ENCODE measurements at regions of chr11 and their contacts with region 1.

Region 1: DNA sequence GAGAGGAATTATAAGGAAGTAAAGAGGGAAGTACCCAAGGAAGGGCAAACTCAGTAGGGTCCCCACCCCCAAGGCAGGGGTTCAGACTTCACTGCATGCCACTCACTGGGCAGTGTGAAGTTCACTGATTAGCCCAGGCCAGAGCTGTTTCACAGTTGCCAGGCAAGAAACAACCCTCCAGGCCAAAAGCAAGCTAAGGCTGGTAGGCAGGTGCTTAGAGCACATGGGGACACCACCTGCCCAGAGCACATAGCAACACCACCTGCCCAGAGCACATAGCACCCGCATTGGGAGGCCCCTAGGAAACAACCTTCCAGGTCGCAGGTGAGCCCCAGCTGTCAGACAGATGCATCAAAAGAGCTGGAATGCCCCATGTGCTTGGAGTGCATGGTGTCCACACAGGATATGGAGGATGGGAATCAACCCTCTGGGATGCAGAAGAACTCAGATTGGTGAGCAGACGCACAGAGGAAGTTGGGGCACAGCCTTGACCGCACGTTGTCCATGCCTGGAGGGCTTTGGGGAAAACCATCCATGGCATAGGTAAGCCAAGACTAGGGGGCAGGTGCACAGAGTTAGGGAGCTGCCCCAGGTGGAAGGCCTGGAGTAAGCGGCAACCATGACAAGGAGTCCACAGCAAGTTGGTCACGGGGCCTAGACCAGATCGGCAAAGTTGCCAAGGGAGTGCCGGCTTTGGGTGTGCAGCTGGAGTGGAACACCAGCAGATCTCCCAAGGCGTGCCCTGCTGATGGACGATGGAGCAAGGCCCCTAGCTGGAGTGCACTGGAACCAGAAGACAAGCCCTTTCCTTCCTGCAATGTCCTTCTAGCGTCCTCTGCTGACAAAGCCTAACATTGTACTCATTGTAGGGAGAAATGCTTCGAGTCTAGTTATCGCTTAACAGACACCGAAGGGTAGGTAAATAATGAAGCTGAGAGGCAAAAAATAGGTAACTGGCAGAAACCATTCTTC is 7.8 kb upstream of the TMEM216 start:
- DNase-seq: no peak
- H3K4me3 Mint-ChIP-seq: no peak overlapping the region
- H3K27ac Mint-ChIP-seq: no peak overlapping the region
- H3K4me1 Mint-ChIP-seq: peaks cover 6% of the 10 kb centered on the region
- H3K27me3 Mint-ChIP-seq: no peaks in the 10 kb centered on the region

Region 2: GRCh38 chr11:61028272-61028761 is 356.2 kb before region 1 on chr11:
- CTCF ChIA-PET with region 1: no interaction called
- DNase-seq: peak; percentile 73
- H3K4me3 Mint-ChIP-seq: peak overlapping the region; percentile 82
- H3K27ac Mint-ChIP-seq: peak overlapping the region; percentile 98
- H3K4me1 Mint-ChIP-seq: peaks cover 89% of the 10 kb centered on the region
- H3K27me3 Mint-ChIP-seq: no peaks in the 10 kb centered on the region

Region 3: GRCh38 chr11:61294717-61295595 is 89.6 kb before region 1 on chr11 and contains the start of gene VWCE:
- CTCF ChIA-PET with region 1: interaction called, 13 read pairs
- DNase-seq: peak; percentile 81
- H3K4me3 Mint-ChIP-seq: peak within 1 kb of the TSS; percentile 77
- H3K27ac Mint-ChIP-seq: no peak within 1 kb of the TSS
- H3K4me1 Mint-ChIP-seq: peaks cover 37% of the 10 kb centered on the region
- H3K27me3 Mint-ChIP-seq: peaks cover 43% of the 10 kb centered on the region

Region 4: DNA sequence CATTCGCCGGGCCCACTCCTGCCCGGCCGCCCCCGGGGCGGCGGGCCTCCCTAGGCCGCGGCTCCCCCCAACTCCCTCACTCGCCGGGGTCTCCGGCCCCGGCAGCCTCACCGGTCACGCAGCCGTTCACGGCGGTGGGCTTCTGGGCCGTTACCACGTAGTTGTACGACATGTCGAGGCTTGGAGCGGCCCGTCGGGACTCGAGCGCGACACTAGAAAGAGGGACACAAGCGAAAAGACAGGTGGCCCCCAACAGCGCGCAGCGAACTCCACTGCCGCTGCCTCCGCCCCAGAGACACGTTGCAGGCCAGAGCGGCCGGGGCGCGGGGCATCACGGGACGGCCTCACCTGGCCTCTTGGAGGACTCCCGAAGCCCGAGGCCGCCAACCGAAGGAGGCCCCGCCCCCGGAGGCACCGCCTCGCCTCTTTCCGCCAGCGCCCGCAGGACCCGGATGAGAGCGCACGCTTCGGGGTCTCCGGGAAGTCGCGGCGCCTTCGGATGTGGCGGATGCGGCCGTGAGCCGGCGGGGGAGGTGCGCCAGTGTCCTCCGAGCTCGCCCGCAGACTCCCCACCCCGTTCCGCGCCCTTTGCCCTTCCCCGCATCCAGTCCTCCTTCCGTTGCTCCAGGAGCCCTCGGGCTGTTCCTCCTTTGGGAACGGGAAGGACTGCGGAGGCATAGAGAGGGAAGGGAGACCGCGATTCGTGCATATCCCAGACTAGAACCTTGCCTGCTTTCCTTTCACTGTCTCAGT is 51.6 kb before region 1 on chr11 and contains the starts of genes DDB1 and TKFC:
- CTCF ChIA-PET with region 1: interaction called, 309 read pairs
- DNase-seq: peak; percentile 98
- H3K4me3 Mint-ChIP-seq: peak within 1 kb of the TSS; percentile 93
- H3K27ac Mint-ChIP-seq: peak within 1 kb of the TSS; percentile 97
- H3K4me1 Mint-ChIP-seq: peaks cover 72% of the 10 kb centered on the region
- H3K27me3 Mint-ChIP-seq: no peaks in the 10 kb centered on the region

Region 5: DNA sequence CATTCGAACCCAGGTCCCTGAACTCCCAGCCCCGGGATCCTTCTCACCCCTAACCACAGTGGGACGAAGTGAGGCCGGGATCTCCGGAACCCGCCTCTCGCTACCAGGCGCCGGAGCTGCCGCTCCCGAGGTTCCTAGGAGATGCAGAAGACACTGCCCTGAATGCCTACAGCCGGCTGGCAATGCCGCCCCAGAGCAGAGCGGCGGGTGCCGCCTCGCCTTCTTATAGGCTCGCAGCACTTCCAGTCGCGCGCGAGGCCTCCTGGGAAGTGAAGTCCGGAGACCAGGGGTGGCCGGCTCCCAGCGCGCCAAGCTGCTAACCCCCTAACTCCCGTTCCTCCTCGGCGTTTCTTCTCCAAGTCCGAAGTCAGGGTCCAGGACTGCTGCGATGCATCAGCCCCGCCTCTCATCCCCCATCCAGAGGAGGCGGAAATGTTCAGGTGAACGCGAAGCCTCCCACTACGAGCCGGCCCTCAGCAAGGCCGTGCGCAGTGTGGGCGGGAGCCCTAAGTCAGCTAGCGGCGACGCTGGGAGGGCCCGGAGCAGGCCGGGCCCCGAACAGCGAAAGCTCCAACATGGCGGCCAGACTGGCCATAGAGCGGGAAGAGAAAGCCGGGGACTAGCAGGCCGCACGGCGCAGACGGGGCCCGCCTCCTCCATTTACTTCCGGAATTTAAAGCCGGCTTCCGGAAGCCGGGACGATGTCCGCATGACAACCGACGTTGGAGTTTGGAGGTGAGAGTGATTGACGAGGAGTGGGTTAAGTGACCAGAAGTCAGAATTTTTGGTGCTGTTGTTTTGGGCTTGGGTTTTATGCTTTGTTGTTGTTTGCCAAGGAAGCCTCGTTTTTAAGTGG is 22.6 kb before region 1 on chr11 and contains the starts of genes CYB561A3 and TMEM138:
- CTCF ChIA-PET with region 1: interaction called, 46 read pairs
- DNase-seq: peak; percentile 95
- H3K4me3 Mint-ChIP-seq: peak within 1 kb of the TSS; percentile 100
- H3K27ac Mint-ChIP-seq: peak within 1 kb of the TSS; percentile 99
- H3K4me1 Mint-ChIP-seq: peaks cover 49% of the 10 kb centered on the region
- H3K27me3 Mint-ChIP-seq: no peaks in the 10 kb centered on the region

Region 6: DNA sequence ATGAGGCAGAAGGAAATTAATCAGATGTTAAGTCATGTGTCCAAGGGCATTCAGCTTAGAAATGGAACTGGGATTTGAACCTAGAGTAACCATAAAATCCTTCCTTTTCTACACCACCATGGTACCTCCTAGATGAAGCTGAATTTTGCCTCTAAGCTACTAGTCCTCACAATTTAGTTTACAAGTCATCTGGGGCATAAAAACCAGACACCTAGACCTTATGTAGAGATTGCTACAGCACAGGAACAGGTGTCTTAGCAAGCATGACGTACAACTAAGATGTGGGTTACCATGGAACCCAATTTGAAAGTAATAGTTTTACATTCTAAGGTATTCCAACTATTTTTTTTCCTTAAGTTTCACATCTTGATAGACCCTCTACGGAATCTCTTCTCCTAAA is 17.0 kb after region 1 on chr11:
- CTCF ChIA-PET with region 1: interaction called, 30 read pairs
- DNase-seq: no peak
- H3K4me3 Mint-ChIP-seq: no peak overlapping the region
- H3K27ac Mint-ChIP-seq: no peak overlapping the region
- H3K4me1 Mint-ChIP-seq: no peaks in the 10 kb centered on the region
- H3K27me3 Mint-ChIP-seq: no peaks in the 10 kb centered on the region

Region 7: GRCh38 chr11:61477727-61478148 is 93.2 kb after region 1 on chr11:
- CTCF ChIA-PET with region 1: no interaction called
- DNase-seq: peak; percentile 68
- H3K4me3 Mint-ChIP-seq: no peak overlapping the region
- H3K27ac Mint-ChIP-seq: no peak overlapping the region
- H3K4me1 Mint-ChIP-seq: peaks cover 7% of the 10 kb centered on the region
- H3K27me3 Mint-ChIP-seq: peaks cover 3% of the 10 kb centered on the region

Region 8: GRCh38 chr11:61495801-61496597 is 111.4 kb after region 1 on chr11:
- CTCF ChIA-PET with region 1: no interaction called
- DNase-seq: no peak
- H3K4me3 Mint-ChIP-seq: no peak overlapping the region
- H3K27ac Mint-ChIP-seq: no peak overlapping the region
- H3K4me1 Mint-ChIP-seq: no peaks in the 10 kb centered on the region
- H3K27me3 Mint-ChIP-seq: no peaks in the 10 kb centered on the region